ENCODE measurements at regions of chr5 and their contacts with region 1.

Region 1: DNA sequence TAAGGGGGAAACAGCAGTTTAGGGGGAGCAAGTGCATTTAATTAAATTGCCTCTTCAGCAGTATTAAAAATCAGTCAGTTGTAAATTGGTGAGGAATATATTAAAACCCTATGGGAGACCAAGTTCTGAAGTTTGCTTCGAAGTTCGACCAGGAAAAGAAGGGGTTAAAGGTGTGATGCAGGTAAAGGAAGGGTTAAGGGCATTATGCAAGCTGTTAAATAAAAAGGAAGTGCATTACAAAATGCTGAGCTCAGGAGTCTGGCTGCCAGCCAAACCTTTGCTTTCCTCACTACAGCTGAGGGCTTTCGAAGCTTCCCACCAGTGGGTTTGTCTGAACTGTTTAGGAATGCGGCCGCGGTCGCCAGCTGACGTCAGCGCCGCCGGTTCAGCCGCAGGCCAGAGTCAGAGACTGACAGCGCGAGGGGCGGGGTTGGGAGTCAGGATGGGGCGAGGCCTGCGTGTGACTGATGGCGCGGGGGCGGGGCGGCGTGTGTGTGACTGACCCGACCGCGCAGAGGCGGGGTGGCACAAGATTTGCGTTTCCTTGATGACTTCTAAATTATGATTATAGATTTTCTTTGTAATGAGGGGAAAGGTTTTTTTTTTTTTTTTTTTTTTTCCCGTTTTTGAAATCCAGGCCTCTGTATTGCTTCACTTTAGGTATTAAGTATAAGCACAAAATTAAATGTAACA is 76.6 kb downstream of the ZSWIM6 start:
- DNase-seq: peak; percentile 99 to 100
- ATAC-seq: peak; percentile 100
- H3K4me3 ChIP-seq: peak overlapping the region; percentile 60
- H3K27ac ChIP-seq: peak overlapping the region; percentile 58
- H3K4me1 ChIP-seq: peaks cover 17% of the 10 kb centered on the region
- H3K27me3 ChIP-seq: no peaks in the 10 kb centered on the region
- CTCF ChIP-seq: no peak

Region 2: DNA sequence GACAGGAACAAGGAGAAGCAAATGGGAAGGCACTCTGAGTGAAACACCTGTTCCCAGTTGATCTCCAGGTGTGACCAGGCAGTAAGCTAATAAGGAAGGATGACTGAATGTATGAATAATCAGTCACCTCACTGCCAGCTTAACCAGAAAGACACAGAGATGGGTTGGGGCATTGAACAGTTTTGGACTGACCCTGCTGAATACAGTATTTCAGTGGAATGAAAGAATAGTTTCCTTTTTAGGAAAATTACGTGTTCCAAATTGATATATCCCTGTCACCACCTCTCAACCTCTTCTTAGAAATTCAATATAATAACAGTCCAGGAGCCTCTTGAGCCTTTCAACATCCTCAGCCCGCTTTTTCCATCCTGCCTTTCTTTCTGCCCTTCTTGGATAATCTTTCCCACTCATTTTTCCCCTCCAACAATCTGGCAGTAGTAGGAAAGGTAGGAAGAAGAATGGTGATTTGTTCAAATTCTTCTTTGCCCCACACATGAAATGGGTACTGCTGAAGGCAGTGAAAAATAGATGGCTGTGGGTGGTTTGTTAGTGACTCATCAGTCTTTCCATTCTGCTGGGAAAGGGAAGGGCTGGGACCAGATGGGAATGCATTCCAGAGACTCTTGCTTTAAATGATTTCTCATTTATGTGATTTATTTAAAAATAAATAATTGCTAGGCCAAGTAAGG is 41.3 kb after region 1 on chr5:
- intact Hi-C with region 1: loop called in 1 of 2 experiments (anchors 5 kb)
- DNase-seq: no peak
- ATAC-seq: peak; percentile 69 to 85 (median 81)
- H3K4me3 ChIP-seq: no peak overlapping the region
- H3K27ac ChIP-seq: peak overlapping the region; percentile 62
- H3K4me1 ChIP-seq: peaks cover 27% of the 10 kb centered on the region
- H3K27me3 ChIP-seq: no peaks in the 10 kb centered on the region
- CTCF ChIP-seq: no peak

Region 3: GRCh38 chr5:63053019-63053638 is 1644.5 kb after region 1 on chr5:
- intact Hi-C with region 1: no loop called
- DNase-seq: peak; percentile 24 to 71
- ATAC-seq: peak in 3 of 4 donors; percentile 48 to 54 (median 53)
- H3K4me3 ChIP-seq: no peak overlapping the region
- H3K27ac ChIP-seq: no peak overlapping the region
- H3K4me1 ChIP-seq: no peaks in the 10 kb centered on the region
- H3K27me3 ChIP-seq: no peaks in the 10 kb centered on the region
- CTCF ChIP-seq: no peak

Measured in psoas muscle (tissue), 8 donors.